AG04449 (cell line): ENCODE measurements at regions of chr14 and their contacts with region 1.

Region 1: DNA sequence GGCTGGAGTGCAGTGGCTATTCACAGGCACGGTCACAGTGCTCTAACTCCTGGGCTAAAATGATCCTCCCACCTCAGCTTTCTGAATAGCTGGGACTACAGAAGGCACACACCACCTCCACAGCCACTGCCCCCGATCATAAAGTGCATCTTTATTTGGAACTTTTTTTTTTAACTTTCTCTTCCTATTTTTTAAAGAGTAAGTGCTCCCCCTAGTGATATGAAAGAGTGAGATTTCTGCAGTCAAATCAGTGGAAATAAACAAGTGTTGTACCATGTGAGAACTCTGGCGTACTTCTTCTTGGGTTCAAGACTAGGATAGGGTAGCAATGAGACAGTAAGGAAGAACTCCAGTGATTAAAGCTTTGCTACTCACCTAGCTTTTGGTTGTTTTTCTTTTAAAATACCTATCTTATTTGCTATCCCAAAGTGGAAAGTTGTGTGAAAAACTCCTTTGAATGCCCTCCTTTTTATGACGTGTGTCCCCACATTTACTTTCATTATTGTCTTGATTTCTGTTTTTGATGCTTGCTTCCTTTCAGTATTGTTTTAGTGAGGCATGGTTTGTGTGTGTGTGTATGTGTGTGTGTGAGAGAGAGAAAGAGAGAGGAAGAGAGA is 6.6 kb downstream of the PPP4R4 start:
- DNase-seq: no peak
- H3K4me3 ChIP-seq: no peak overlapping the region; the same call in 1 of the 2 replicates
- CTCF ChIP-seq: peak; percentile 8

Region 2: DNA sequence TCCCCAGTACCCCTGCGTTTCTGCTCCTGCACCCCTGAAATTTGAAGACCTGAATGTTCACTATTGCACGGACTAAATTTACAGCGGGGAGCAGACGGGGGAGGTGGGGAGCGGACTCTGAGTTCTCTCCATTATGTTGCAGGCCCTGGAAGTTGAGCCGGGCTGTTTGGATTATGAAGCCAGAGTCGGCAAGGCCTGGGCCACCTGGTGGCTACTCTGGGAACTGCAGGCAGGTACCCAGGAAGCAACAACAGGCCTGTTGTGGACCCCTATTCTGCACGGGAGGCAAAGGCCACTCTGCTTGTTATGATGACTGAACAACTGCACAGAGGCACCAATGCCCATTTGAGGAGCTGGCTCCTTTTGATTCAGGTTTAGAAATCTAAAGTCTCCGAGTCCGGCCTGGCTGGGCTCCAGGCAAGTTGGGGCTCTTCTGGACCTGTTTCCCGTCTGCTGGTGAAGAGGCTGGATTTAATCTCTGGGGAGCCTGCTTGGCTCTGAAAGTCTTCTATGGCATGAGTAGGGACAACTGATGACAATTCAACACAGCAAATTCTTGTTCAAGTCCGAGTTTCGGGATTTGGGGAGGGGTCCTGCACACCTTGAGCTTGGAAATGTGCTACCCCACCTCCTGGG is 287.7 kb before region 1 on chr14:
- CTCF ChIA-PET with region 1: no interaction called
- POLR2A ChIA-PET with region 1: no interaction called
- DNase-seq: no peak
- H3K4me3 ChIP-seq: no peak overlapping the region
- CTCF ChIP-seq: peak; percentile 97

Region 3: GRCh38 chr14:94051115-94051514 is 129.6 kb before region 1 on chr14:
- CTCF ChIA-PET with region 1: interaction called, 15 read pairs
- POLR2A ChIA-PET with region 1: no interaction called
- DNase-seq: no peak
- H3K4me3 ChIP-seq: no peak overlapping the region
- CTCF ChIP-seq: peak; percentile 56

Region 4: GRCh38 chr14:94193776-94194175 is 13.0 kb after region 1 on chr14:
- CTCF ChIA-PET with region 1: interaction called, 38 read pairs
- POLR2A ChIA-PET with region 1: no interaction called
- DNase-seq: no peak
- H3K4me3 ChIP-seq: no peak overlapping the region
- CTCF ChIP-seq: no peak

Region 5: GRCh38 chr14:94213021-94213420 is 32.3 kb after region 1 on chr14:
- CTCF ChIA-PET with region 1: interaction called, 11 read pairs
- POLR2A ChIA-PET with region 1: no interaction called
- DNase-seq: peak; percentile 75
- H3K4me3 ChIP-seq: no peak overlapping the region
- CTCF ChIP-seq: no peak